Heart left ventricle (tissue), 16 donors: ENCODE measurements at regions of chr5 and their contacts with region 1.

Region 1: GRCh38 chr5:61823781-61824180 is 482.2 kb upstream of the KIF2A start:
- DNase-seq: no peak
- ATAC-seq: no peak
- H3K4me3 ChIP-seq: no peak overlapping the region
- H3K27ac ChIP-seq: no peak overlapping the region
- H3K4me1 ChIP-seq: no peaks in the 10 kb centered on the region
- H3K27me3 ChIP-seq: no peaks in the 10 kb centered on the region
- CTCF ChIP-seq: no peak
- POLR2A ChIP-seq: no peak

Region 2: DNA sequence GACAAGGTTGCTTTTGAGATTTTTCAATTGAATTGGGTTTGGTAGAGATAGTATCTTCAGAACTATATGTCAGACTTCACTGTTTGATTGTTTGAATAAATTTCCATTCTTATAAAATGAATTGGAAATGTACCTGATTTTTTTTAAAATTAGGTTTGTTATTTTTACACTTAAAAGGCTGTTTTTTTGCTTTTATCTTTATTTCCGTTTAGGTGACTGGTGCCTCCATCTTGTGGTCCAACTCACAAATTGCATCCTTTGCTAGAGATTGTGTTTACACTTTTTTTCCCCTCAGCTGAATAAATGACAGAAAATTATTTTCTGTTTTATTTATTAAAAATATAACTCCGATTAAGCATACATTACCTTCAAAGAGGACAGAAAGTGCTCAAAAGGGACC is 863.2 kb before region 1 on chr5:
- intact Hi-C with region 1: loop called in 1 of 10 experiments (anchors 10 kb)
- DNase-seq: no peak
- ATAC-seq: no peak
- H3K4me3 ChIP-seq: no peak overlapping the region
- H3K27ac ChIP-seq: no peak overlapping the region
- H3K4me1 ChIP-seq: peaks cover 0 to 14% (median 0%) of the 10 kb centered on the region in 12 donors
- H3K27me3 ChIP-seq: no peaks in the 10 kb centered on the region
- CTCF ChIP-seq: peak in 10 of 12 donors; percentile 19 to 55 (median 38)
- POLR2A ChIP-seq: no peak

Region 3: GRCh38 chr5:61673007-61673735 is 150.6 kb before region 1 on chr5:
- intact Hi-C with region 1: loop called in 1 of 10 experiments (anchors 10 kb)
- DNase-seq: no peak
- ATAC-seq: peak in 1 of 4 donors; percentile 28
- H3K4me3 ChIP-seq: no peak overlapping the region
- H3K27ac ChIP-seq: no peak overlapping the region
- H3K4me1 ChIP-seq: peaks cover 0 to 18% (median 0%) of the 10 kb centered on the region in 12 donors
- H3K27me3 ChIP-seq: no peaks in the 10 kb centered on the region
- CTCF ChIP-seq: no peak
- POLR2A ChIP-seq: no peak

Region 4: GRCh38 chr5:61881821-61882487 is 58.2 kb after region 1 on chr5:
- intact Hi-C with region 1: no loop called
- DNase-seq: no peak
- ATAC-seq: no peak
- H3K4me3 ChIP-seq: no peak overlapping the region
- H3K27ac ChIP-seq: no peak overlapping the region
- H3K4me1 ChIP-seq: no peaks in the 10 kb centered on the region
- H3K27me3 ChIP-seq: no peaks in the 10 kb centered on the region
- CTCF ChIP-seq: no peak
- POLR2A ChIP-seq: no peak